Breast epithelium (tissue), 4 donors: ENCODE measurements at regions of chr6 and their contacts with region 1.

Region 1: DNA sequence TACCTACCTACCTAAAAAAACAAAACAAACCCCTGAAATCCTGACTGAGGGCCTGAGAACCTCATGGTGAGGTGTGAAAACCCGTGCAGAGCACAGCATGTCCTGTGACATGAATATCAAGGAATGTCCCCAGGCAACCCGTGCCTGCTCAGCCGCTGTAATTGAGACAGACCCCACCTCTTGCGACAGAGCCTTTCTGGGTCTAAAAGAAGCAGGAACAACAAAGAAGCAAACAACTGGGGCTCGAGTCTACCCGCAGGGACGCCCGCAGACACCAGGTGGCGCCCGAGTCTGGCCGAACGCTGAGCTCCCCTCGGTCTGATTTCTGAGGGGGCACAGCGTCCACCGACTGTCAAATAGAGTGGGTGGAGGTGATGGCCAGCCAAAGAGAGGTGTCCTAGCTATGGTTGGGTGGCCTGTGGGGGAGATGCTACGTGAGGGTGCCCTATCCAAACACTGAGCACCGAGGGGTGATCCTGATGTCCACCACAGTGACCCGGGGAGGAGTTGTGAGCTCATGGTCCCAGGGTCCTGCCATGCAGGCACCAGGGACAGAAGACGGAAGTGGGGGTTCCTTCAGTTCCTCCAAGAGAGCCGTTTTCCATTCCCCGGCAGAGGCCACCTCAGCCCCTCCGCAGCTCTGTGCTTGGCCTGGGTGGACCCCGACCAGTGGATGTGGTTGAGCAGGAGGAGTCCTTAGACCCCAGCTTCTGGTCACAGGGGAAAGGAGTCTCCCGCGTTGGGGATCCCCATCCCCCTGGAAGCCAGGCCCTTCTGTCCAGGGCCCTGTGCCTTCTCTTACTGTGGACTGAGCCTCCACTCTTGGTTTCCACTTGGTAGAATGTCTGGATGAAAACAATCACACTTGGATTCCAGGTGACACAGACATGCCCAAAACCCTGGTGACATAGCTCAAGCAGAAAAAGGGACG is 268.2 kb downstream of the CDC5L start:
- DNase-seq: peak; percentile 54 to 86
- H3K4me3 ChIP-seq: no peak overlapping the region
- H3K27ac ChIP-seq: peak overlapping the region; percentile 28 to 38
- H3K4me1 ChIP-seq: no peaks in the 10 kb centered on the region
- H3K27me3 ChIP-seq: no peaks in the 10 kb centered on the region
- CTCF ChIP-seq: peak; percentile 86 to 93 (median 88)
- POLR2A ChIP-seq: no peak

Region 2: DNA sequence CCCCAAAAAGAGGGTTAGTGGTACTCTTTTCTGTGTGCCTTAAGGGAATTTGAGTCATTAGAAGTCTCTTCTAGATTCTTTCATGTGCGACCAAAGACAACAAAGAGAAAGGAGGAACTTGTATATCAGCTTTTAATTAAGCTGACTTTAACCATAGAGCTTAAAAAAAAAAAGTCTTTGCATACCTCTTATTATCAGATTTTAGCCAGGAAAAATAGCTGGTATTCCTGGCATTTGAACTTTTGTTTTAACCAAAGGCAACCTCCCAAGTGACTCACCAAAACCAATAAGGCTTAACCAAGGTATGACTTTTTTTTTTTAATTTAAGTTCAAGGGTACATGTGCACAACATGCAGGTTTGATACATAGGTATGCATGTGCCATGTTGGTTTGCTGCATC is 106.8 kb after region 1 on chr6:
- intact Hi-C with region 1: loop called (anchors 10 kb)
- DNase-seq: no peak
- H3K4me3 ChIP-seq: no peak overlapping the region
- H3K27ac ChIP-seq: no peak overlapping the region
- H3K4me1 ChIP-seq: no peaks in the 10 kb centered on the region
- H3K27me3 ChIP-seq: no peaks in the 10 kb centered on the region
- CTCF ChIP-seq: no peak
- POLR2A ChIP-seq: no peak

Region 3: DNA sequence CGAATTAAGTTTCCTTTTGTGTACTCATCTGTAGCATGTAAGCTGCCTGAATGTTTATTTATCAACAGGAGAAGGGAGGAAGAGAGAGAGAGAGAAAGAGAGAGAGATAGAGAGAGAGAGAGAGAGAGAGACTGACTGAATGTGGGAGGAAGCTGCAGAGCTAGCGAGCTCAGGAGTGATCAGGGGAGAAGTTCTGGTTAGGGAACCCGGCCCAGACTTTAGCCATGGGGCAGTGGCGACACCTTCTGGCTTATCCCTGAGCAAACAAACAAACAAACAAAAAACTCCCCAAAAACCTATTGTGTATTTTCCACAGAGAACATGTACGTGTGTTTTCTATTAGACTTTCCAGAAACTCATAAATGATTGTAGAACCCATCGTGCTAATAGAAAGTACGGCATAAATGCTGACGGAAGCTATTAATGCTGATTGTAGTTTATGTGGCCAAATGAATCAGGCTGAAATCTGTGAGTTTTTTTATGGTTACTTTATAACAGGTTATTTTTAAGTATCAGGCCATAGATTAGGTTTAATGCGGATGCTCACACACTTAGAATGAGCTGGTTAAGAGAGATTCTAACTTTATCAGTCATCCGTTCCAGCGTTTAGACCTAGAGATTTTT is 1267.2 kb after region 1 on chr6:
- intact Hi-C with region 1: loop called (anchors 10 kb)
- DNase-seq: peak in 1 of 2 donors; percentile 55
- H3K4me3 ChIP-seq: no peak overlapping the region
- H3K27ac ChIP-seq: peak overlapping the region in 1 of 2 donors; percentile 6
- H3K4me1 ChIP-seq: no peaks in the 10 kb centered on the region
- H3K27me3 ChIP-seq: no peaks in the 10 kb centered on the region
- CTCF ChIP-seq: peak; percentile 22 to 66 (median 60)
- POLR2A ChIP-seq: no peak

Region 4: GRCh38 chr6:46293641-46294316 is 1638.1 kb after region 1 on chr6:
- intact Hi-C with region 1: no loop called
- DNase-seq: no peak
- H3K4me3 ChIP-seq: no peak overlapping the region
- H3K27ac ChIP-seq: no peak overlapping the region
- H3K4me1 ChIP-seq: no peaks in the 10 kb centered on the region
- H3K27me3 ChIP-seq: no peaks in the 10 kb centered on the region
- CTCF ChIP-seq: no peak
- POLR2A ChIP-seq: no peak